Activated CD8-positive, alpha-beta T cell treated with anti-CD3 and anti-CD28 coated beads, Interleukin-2, amount 10 ng/mL, durations not matched to agents 7 days and 5 days (primary cell): ENCODE measurements at regions of chr1 and their contacts with region 1.

Region 1: DNA sequence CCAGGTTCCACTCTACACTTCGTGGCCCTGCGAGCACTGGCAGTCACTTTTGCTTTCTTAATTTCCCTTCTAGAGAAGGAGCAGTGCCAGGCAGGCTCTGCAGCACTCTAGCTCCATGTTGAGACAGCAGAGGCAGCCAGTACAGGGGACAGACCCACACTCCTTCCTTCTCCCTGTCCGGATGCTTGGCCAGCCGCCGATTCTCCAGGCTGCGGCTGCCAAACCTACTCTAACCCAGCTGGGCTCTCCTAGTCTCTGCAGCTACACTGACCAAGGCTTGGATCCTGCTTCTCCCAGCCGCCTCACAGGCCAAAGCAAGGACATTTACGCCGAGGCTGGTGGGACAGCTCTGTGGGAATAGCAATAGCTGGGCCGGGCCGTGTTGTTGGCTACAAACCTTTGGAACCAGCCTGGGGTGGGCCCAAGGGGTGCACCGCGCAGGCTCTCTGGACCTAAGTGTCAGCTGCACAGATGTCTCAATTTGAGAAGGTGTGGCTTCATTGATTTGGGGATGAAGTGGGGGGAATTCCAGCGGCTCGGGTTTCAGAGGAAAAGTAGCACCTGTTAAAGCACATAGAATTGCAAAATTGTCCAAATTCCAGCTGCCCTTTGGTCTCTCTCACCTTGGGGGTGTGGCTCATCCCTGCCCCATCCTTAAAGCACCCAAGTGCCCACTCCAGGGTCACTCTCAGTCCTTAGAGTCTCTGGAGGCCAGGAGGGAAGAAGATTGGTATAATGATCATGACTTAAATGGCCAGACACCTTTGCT is 3.2 kb downstream of the BARHL2 start:
- DNase-seq: no peak
- ATAC-seq: no peak
- H3K4me3 Mint-ChIP-seq: no peak overlapping the region
- H3K27ac Mint-ChIP-seq: no peak overlapping the region
- H3K4me1 Mint-ChIP-seq: peaks cover 10% of the 10 kb centered on the region
- H3K27me3 Mint-ChIP-seq: peaks cover 75% of the 10 kb centered on the region

Region 2: GRCh38 chr1:90729504-90730242 is 15.7 kb after region 1 on chr1:
- CTCF ChIA-PET with region 1: interaction called, 38 read pairs
- POLR2A ChIA-PET with region 1: interaction called, 4 read pairs
- DNase-seq: no peak
- ATAC-seq: no peak
- H3K4me3 Mint-ChIP-seq: no peak overlapping the region
- H3K27ac Mint-ChIP-seq: no peak overlapping the region
- H3K4me1 Mint-ChIP-seq: peaks cover 38% of the 10 kb centered on the region
- H3K27me3 Mint-ChIP-seq: peaks cover 79% of the 10 kb centered on the region

Region 3: GRCh38 chr1:90841473-90841872 is 127.5 kb after region 1 on chr1:
- CTCF ChIA-PET with region 1: no interaction called
- POLR2A ChIA-PET with region 1: no interaction called
- DNase-seq: no peak
- ATAC-seq: no peak
- H3K4me3 Mint-ChIP-seq: no peak overlapping the region
- H3K27ac Mint-ChIP-seq: no peak overlapping the region
- H3K4me1 Mint-ChIP-seq: peaks cover 2% of the 10 kb centered on the region
- H3K27me3 Mint-ChIP-seq: peaks cover 86% of the 10 kb centered on the region

Region 4: GRCh38 chr1:90862782-90863181 is 148.9 kb after region 1 on chr1:
- CTCF ChIA-PET with region 1: no interaction called
- POLR2A ChIA-PET with region 1: no interaction called
- DNase-seq: no peak
- ATAC-seq: no peak
- H3K4me3 Mint-ChIP-seq: no peak overlapping the region
- H3K27ac Mint-ChIP-seq: no peak overlapping the region
- H3K4me1 Mint-ChIP-seq: no peaks in the 10 kb centered on the region
- H3K27me3 Mint-ChIP-seq: peaks cover 7% of the 10 kb centered on the region